ENCODE measurements at regions of chr15 and their contacts with region 1.

Region 1: DNA sequence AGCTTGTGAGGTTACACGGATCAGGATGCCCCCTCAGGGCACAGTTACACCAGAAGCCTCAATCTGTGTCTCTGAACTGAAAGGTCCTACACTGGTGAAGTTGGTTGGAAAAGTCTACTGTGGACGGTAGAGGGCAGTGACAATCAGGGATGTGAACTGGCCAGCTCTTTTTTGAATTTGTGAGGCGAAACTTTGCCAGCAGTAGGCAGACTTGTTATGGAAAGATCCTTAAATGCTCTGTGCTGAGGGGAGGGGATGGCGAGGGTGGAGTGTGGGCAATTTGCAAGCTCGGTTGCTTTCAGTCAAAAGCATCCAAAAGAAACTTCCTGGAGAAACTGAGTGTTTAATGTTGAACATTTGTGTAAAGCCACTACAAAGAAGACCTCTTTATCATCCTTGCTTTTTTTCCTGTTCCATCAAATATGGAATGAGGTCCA is 127.4 kb upstream of the ABHD17C start:
- DNase-seq: peak; percentile 86
- H3K4me3 ChIP-seq: no peak overlapping the region
- H3K27ac ChIP-seq: peak overlapping the region; percentile 12
- H3K4me1 ChIP-seq: peaks cover 7% of the 10 kb centered on the region
- H3K27me3 ChIP-seq: no peaks in the 10 kb centered on the region

Region 2: DNA sequence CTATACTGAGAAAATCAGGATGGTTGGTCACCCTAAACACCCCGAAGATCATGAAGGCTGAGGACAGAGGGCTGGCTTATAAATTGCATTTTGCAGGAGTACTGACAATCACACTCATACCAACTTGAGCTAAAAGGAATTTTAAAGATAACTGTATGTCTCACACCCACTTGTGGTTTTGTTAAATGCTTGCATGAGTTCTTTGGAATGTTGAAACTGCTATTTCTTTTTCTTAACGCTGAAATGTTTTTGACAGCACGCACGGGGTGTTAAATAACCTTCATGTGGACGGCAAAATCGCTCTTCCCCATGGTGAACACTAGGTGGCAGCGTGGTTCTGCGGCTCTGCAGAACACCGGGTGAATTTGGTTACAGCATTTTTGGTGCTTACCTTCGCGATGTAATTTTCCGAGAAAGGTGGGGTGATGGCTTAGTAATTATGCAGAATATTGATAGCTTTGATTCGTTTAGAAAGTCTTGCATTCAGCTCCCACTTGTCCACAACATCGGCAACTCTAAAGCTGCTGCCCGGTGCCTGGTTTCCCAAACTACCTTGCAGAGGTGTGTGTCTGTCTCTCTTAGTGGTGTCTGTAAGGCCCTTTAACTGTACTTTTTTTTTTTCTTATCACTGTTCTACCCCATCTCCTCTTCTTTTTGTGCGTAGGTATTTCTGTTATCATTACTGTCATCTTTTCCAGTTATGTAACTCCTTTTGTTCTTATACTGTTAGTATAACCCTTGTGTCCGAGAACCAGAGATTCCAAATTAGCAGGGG is 111.9 kb before region 1 on chr15:
- in situ Hi-C with region 1: loop called (anchors 10 kb)
- DNase-seq: peak; percentile 96
- H3K4me3 ChIP-seq: no peak overlapping the region
- H3K27ac ChIP-seq: peak overlapping the region; percentile 61
- H3K4me1 ChIP-seq: peaks cover 29% of the 10 kb centered on the region
- H3K27me3 ChIP-seq: no peaks in the 10 kb centered on the region

Region 3: GRCh38 chr15:80776420-80777045 is 208.8 kb after region 1 on chr15:
- in situ Hi-C with region 1: loop called (anchors 10 kb)
- DNase-seq: peak; percentile 81
- H3K4me3 ChIP-seq: no peak overlapping the region
- H3K27ac ChIP-seq: peak overlapping the region; percentile 76
- H3K4me1 ChIP-seq: peaks cover 34% of the 10 kb centered on the region
- H3K27me3 ChIP-seq: no peaks in the 10 kb centered on the region

Region 4: DNA sequence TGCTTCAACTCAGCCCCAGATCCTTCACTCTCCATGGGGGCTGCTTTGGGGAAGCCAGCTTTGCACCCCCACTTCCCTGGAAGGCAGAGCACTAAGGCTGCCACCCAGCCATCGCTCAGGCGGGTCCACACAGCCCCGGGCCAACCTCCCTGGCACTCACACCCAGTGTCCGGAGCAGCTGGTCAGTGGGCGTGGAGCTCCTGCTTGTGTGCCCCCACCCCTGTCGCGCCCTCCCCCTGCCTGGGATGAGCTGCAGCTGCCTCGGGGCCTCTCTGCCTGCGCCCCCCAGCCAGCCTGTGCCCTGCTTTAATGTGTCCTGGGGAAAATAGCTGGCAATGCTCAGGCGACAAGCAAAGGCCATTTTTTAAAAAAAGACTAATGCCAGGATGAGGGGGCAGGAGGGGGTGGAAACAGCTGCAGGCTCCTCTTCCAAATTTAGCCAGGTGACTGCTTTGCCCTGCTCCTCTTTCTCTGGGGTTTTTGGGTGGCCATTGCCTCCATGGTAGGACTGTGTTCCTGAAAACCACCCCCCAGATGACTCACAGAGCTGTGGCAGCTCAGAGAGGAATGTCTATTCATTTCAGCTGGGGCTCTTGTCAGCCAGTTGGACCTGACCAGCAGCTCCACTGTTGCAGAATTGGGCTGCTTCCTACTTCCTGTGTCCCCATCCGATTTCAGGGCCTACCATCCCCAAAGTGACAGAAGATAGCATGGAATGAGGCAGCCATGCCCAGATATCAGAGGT is 276.4 kb after region 1 on chr15:
- in situ Hi-C with region 1: no loop called
- DNase-seq: peak; percentile 85
- H3K4me3 ChIP-seq: no peak overlapping the region
- H3K27ac ChIP-seq: no peak overlapping the region
- H3K4me1 ChIP-seq: peaks cover 18% of the 10 kb centered on the region
- H3K27me3 ChIP-seq: no peaks in the 10 kb centered on the region

Region 5: GRCh38 chr15:80893777-80894176 is 326.0 kb after region 1 on chr15:
- in situ Hi-C with region 1: no loop called
- DNase-seq: peak; percentile 79
- H3K4me3 ChIP-seq: no peak overlapping the region
- H3K27ac ChIP-seq: 0 out of 2 replicates have a peak overlapping the region, but pooled peaks have one; percentile 19
- H3K4me1 ChIP-seq: peaks cover 26% of the 10 kb centered on the region
- H3K27me3 ChIP-seq: no peaks in the 10 kb centered on the region

Measured in GM23248 (cell line).